ENCODE measurements at regions of chr13 and their contacts with region 1.

Region 1: DNA sequence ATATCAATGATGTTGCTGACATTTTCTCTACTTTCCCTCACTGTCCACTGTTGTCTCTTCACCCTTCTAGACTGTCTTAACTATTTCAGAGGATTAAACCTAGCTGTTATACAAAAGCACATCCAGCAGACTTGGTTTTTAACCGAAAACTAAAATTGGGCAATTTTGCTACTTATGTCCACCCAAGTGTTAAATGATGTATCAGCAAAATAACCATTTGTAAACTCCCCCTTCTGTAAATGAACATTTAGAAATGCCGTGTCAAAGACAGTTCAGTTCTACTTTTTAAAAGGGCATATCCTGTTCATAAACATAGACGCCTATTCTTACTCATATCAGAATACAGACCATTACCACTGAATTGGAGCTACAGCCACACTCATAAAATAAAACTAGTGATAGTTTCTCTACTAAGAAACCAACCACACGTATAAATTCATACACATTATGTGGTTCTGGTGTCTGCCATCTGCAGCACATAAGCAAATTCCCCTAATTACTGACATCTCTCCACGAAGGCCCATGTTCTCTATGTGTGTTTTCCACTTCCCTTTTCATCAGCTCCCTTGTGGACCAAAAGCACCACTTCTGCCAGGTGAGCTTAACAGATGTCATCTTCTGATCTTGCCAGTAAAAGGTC is 1091.8 kb downstream of the PCDH9 start:
- DNase-seq: peak; percentile 93
- H3K4me3 ChIP-seq: peak overlapping the region; percentile 47
- H3K27ac ChIP-seq: peak overlapping the region; percentile 96
- H3K4me1 ChIP-seq: peaks cover 45% of the 10 kb centered on the region
- CTCF ChIP-seq: no peak

Region 2: DNA sequence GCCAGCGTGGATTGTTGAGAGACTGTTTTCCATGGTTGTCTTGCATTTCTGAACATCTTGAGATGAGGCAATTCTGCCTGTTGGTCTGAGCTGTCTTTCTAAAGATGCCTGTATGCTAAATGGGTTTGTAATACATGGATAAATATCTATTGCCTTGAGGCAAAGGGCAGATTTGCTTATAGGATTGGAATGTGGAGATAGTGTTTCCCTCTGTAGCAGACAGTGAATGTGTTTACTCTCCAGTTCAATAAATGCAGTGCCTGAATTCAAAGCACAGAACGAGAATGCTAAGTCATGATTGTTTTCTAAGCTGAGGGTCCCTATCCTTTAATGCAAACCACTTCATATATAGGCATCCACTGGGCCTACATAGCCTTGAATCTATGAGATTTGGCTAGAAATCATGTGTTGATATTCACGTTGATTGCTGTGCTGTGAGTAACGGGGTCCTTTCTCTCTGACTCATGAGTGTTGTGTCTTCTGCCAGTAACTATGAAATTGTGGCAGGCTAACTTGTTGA is 1462.9 kb before region 1 on chr13:
- CTCF ChIA-PET with region 1: no interaction called
- POLR2A ChIA-PET with region 1: no interaction called
- intact Hi-C with region 1: no loop called
- DNase-seq: no peak
- H3K4me3 ChIP-seq: no peak overlapping the region
- H3K27ac ChIP-seq: no peak overlapping the region
- H3K4me1 ChIP-seq: no peaks in the 10 kb centered on the region
- CTCF ChIP-seq: no peak

Region 3: GRCh38 chr13:65414187-65414586 is 724.1 kb before region 1 on chr13:
- CTCF ChIA-PET with region 1: no interaction called
- POLR2A ChIA-PET with region 1: no interaction called
- intact Hi-C with region 1: no loop called
- DNase-seq: no peak
- H3K4me3 ChIP-seq: no peak overlapping the region
- H3K27ac ChIP-seq: no peak overlapping the region
- H3K4me1 ChIP-seq: no peaks in the 10 kb centered on the region
- CTCF ChIP-seq: no peak

Region 4: DNA sequence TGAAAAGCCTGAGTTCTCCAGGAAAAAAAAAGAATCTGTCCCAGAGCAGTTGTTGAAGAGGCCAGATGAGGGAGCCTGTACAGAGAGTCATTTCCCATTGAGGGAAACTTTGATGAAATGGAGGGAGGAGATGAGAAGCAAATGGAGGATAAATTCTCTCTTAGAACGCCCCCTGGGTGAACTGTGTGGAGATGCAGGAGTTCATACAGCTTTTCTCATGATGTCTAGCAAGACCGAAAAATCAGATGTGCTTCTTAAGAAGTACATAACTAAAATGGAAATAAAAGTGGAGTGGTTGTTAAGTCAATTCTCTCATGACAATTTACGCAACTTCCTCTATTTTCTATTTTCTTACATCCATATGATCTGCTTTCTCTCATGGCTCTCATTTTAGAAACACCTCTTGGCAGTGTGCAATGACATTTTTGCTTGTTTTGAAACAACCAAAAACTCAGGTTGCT is 171.3 kb before region 1 on chr13:
- CTCF ChIA-PET with region 1: no interaction called
- POLR2A ChIA-PET with region 1: no interaction called
- intact Hi-C with region 1: loop called (anchors 5 kb)
- DNase-seq: peak; percentile 52
- H3K4me3 ChIP-seq: no peak overlapping the region
- H3K27ac ChIP-seq: no peak overlapping the region
- H3K4me1 ChIP-seq: no peaks in the 10 kb centered on the region
- CTCF ChIP-seq: peak; percentile 79

Region 5: GRCh38 chr13:66001140-66001539 is 137.2 kb before region 1 on chr13:
- CTCF ChIA-PET with region 1: no interaction called
- POLR2A ChIA-PET with region 1: no interaction called
- intact Hi-C with region 1: no loop called
- DNase-seq: no peak
- H3K4me3 ChIP-seq: no peak overlapping the region
- H3K27ac ChIP-seq: no peak overlapping the region
- H3K4me1 ChIP-seq: no peaks in the 10 kb centered on the region
- CTCF ChIP-seq: no peak

Region 6: DNA sequence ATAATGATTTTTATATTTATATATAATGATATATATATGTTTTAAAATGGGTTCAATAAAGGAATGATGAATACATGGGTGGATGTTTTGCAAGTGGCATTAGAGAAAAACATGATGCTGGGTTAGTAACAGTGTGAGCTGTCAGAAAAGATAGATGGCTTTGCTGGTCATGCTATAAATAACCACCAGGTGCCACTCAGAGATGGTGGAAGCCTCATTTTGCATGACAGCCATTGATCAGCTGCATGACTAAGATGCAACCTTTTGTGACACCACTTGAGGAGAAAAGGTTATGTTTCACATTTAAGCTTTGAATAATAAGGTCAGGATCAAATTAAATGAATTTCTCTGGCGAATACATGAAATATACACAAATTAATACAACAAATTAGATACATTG is 354.2 kb after region 1 on chr13:
- CTCF ChIA-PET with region 1: no interaction called
- POLR2A ChIA-PET with region 1: no interaction called
- intact Hi-C with region 1: loop called (anchors 10 kb)
- DNase-seq: peak; percentile 90
- H3K4me3 ChIP-seq: peak overlapping the region; percentile 25
- H3K27ac ChIP-seq: peak overlapping the region; percentile 63
- H3K4me1 ChIP-seq: peaks cover 30% of the 10 kb centered on the region
- CTCF ChIP-seq: peak; percentile 57

Region 7: DNA sequence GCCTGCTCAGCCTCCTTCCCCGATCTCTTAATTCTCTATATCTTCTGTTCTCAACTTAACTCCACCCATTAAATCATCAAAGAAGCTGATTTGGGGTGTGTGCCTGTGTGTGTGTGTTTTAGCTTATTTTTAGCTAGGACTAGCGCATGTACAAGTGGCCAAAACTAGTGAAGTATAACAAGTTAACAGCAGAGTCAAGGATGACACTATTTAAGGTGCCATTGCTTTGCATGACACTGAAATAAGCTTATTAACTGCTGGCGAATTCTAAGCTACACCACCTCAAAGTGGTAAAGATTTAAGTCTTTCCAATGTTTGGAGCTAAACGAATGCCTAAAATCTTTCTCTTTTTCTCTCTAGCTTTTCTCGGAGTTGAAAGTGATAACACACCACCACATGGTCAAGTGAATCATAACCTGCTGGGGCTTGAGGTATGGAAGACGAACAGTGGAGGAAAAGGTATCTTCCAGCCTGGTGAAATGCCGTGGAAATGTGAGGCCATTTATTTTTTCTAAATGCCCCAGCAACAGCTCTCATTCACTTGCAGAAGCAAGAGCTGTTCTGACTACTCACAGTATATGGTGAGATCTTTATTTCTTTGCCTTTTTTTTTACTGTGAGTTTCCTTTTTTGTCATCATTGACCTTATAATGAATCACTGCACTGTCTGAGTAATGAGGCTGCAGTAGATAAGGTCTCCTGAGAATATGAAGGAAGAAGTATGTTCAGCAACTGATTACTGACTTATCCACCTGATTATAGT is 521.6 kb after region 1 on chr13:
- CTCF ChIA-PET with region 1: no interaction called
- POLR2A ChIA-PET with region 1: interaction called, 5 read pairs
- intact Hi-C with region 1: loop called (anchors 1 kb)
- DNase-seq: peak; percentile 90
- H3K4me3 ChIP-seq: peak overlapping the region; percentile 65
- H3K27ac ChIP-seq: peak overlapping the region; percentile 96
- H3K4me1 ChIP-seq: peaks cover 68% of the 10 kb centered on the region
- CTCF ChIP-seq: peak; percentile 52

Region 8: GRCh38 chr13:66794340-66795031 is 656.2 kb after region 1 on chr13:
- CTCF ChIA-PET with region 1: no interaction called
- POLR2A ChIA-PET with region 1: no interaction called
- intact Hi-C with region 1: loop called (anchors 10 kb)
- DNase-seq: peak; percentile 92
- H3K4me3 ChIP-seq: peak overlapping the region; percentile 39
- H3K27ac ChIP-seq: peak overlapping the region; percentile 94
- H3K4me1 ChIP-seq: peaks cover 35% of the 10 kb centered on the region
- CTCF ChIP-seq: no peak

Region 9: DNA sequence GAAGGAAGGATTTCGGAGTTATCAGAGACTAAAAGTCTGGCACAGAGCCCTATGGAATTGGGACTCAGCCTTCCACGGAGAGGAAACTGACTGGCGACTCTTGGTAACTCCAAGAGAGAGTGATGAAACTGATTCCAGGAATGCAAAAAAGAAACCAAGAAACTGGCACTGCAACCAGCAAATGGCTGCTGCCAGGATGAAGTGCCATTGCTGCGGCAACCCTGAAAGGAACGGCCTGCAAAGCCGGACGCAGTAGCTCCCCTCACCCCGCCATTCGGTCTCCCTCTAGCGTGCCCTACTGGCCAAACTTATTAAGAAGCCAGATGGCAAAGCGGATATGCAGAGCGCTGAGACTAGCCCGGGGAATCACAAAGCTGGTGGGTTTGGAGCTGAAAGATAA is 855.8 kb after region 1 on chr13:
- CTCF ChIA-PET with region 1: interaction called, 3 read pairs
- POLR2A ChIA-PET with region 1: interaction called, 3 read pairs
- intact Hi-C with region 1: loop called (anchors 2 kb)
- DNase-seq: peak; percentile 90
- H3K4me3 ChIP-seq: peak overlapping the region; percentile 49
- H3K27ac ChIP-seq: peak overlapping the region; percentile 99
- H3K4me1 ChIP-seq: peaks cover 70% of the 10 kb centered on the region
- CTCF ChIP-seq: peak; percentile 81

Region 10: GRCh38 chr13:67230404-67231288 is 1092.4 kb after region 1 on chr13:
- CTCF ChIA-PET with region 1: no interaction called
- POLR2A ChIA-PET with region 1: interaction called, 3 read pairs
- intact Hi-C with region 1: loop called (anchors 2 kb)
- DNase-seq: peak; percentile 90
- H3K4me3 ChIP-seq: peak overlapping the region; percentile 90
- H3K27ac ChIP-seq: peak overlapping the region; percentile 51
- H3K4me1 ChIP-seq: peaks cover 22% of the 10 kb centered on the region
- CTCF ChIP-seq: no peak